Activated CD4-positive, alpha-beta memory T cell treated with anti-CD3 and anti-CD28 coated beads, Interleukin-2, amount 10 ng/mL, durations not matched to agents 7 days and 5 days (primary cell): ENCODE measurements at regions of chr6 and their contacts with region 1.

Region 1: GRCh38 chr6:106339334-106340029 is 13.9 kb upstream of the ATG5 start:
- DNase-seq: peak; percentile 54
- H3K4me3 Mint-ChIP-seq: no peak overlapping the region
- H3K27ac Mint-ChIP-seq: no peak overlapping the region
- H3K4me1 Mint-ChIP-seq: peaks cover 4% of the 10 kb centered on the region
- H3K27me3 Mint-ChIP-seq: peaks cover 23% of the 10 kb centered on the region

Region 2: GRCh38 chr6:106325336-106326178 is 13.9 kb before region 1 on chr6 and contains the start of gene ATG5:
- CTCF ChIA-PET with region 1: interaction called, 22 read pairs
- POLR2A ChIA-PET with region 1: interaction called, 6 read pairs
- DNase-seq: peak; percentile 100
- H3K4me3 Mint-ChIP-seq: peak within 1 kb of the TSS; percentile 98
- H3K27ac Mint-ChIP-seq: peak within 1 kb of the TSS; percentile 97
- H3K4me1 Mint-ChIP-seq: peaks cover 38% of the 10 kb centered on the region
- H3K27me3 Mint-ChIP-seq: peaks cover 15% of the 10 kb centered on the region
- total RNA-seq, gene ATG5: 35.4 to 35.6 TPM

Region 3: GRCh38 chr6:106360410-106360988 is 21.0 kb after region 1 on chr6 and contains the start of gene CRYBG1:
- CTCF ChIA-PET with region 1: interaction called, 16 read pairs
- POLR2A ChIA-PET with region 1: no interaction called
- DNase-seq: peak; percentile 69
- H3K4me3 Mint-ChIP-seq: peak within 1 kb of the TSS; percentile 62
- H3K27ac Mint-ChIP-seq: no peak within 1 kb of the TSS
- H3K4me1 Mint-ChIP-seq: peaks cover 12% of the 10 kb centered on the region
- H3K27me3 Mint-ChIP-seq: peaks cover 57% of the 10 kb centered on the region
- total RNA-seq, gene CRYBG1: 59.2 TPM

Region 4: DNA sequence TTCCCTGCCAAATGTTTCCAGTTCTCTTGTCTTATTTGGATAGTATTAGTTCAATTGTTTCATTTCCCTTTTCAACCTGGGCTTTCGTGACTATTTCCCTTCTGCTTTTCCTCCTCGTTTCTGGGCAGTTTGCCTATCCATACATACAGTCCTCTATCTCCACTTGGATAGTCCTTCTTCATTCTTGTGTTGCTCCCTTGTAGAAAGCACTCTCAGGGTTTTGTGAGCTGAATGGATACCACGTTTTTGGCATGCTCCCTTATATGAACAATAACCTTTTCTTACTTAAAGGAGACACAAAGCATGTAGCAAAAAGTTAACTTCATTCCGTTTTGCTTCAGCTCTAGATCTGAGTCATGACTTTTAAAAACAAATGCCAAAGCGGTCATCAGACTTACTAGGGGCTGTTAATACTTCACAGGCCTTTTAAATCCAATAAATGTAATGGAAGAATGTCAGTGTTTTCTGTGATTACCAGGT is 37.6 kb after region 1 on chr6:
- CTCF ChIA-PET with region 1: interaction called, 10 read pairs
- POLR2A ChIA-PET with region 1: no interaction called
- DNase-seq: no peak
- H3K4me3 Mint-ChIP-seq: no peak overlapping the region
- H3K27ac Mint-ChIP-seq: no peak overlapping the region
- H3K4me1 Mint-ChIP-seq: peaks cover 28% of the 10 kb centered on the region
- H3K27me3 Mint-ChIP-seq: peaks cover 7% of the 10 kb centered on the region